H1 (cell line): ENCODE measurements at regions of chr12 and their contacts with region 1.

Region 1: GRCh38 chr12:56117778-56118687 is at the start of gene ZC3H10:
- DNase-seq: peak; percentile 96 to 100
- H3K4me3 ChIP-seq: peak within 1 kb of the TSS; percentile 85 to 99 (median 96)
- H3K27ac ChIP-seq: peak within 1 kb of the TSS; percentile 97
- H3K4me1 ChIP-seq: peaks cover 0 to 9% (median 5%) of the 10 kb centered on the region in 4 experiments; a peak in 5 of 7 replicates
- H3K27me3 ChIP-seq: no peaks in the 10 kb centered on the region
- CTCF ChIP-seq: peak; percentile 28 to 53 (median 41)
- EP300 ChIP-seq: peak; percentile 2 to 64; a peak in 2 of 3 replicates
- POLR2A ChIP-seq: peak; percentile 98 to 100
- RAD21 ChIP-seq: peak in 1 of 2 experiments; percentile 10; a peak in 1 of 4 replicates
- total RNA-seq, gene ZC3H10: 11.2 and 12.5 TPM in 2 replicates

Region 2: GRCh38 chr12:55982319-55982936 is 135.6 kb before region 1 on chr12:
- CTCF ChIA-PET with region 1: no interaction called
- POLR2A ChIA-PET with region 1: no interaction called
- DNase-seq: no peak
- H3K4me3 ChIP-seq: no peak overlapping the region
- H3K27ac ChIP-seq: no peak overlapping the region
- H3K4me1 ChIP-seq: no peaks in the 10 kb centered on the region
- H3K27me3 ChIP-seq: no peaks in the 10 kb centered on the region
- CTCF ChIP-seq: no peak
- EP300 ChIP-seq: no peak
- POLR2A ChIP-seq: no peak
- RAD21 ChIP-seq: no peak

Region 3: GRCh38 chr12:56041552-56042429 is 76.2 kb before region 1 on chr12 and contains the start of gene RPS26:
- CTCF ChIA-PET with region 1: interaction called, 4 read pairs
- POLR2A ChIA-PET with region 1: interaction called, 33 read pairs
- DNase-seq: peak; percentile 89 to 99
- H3K4me3 ChIP-seq: peak within 1 kb of the TSS; percentile 73 to 95 (median 86)
- H3K27ac ChIP-seq: peak within 1 kb of the TSS; percentile 98
- H3K4me1 ChIP-seq: peaks cover 0 to 12% (median 4%) of the 10 kb centered on the region in 4 experiments; a peak in 5 of 7 replicates
- H3K27me3 ChIP-seq: no peaks in the 10 kb centered on the region
- CTCF ChIP-seq: peak; percentile 43 to 56 (median 55)
- EP300 ChIP-seq: no peak
- POLR2A ChIP-seq: peak; percentile 98 to 99
- RAD21 ChIP-seq: peak; percentile 63 to 69
- total RNA-seq, gene RPS26: 53.4 and 64.3 TPM in 2 replicates

Region 4: DNA sequence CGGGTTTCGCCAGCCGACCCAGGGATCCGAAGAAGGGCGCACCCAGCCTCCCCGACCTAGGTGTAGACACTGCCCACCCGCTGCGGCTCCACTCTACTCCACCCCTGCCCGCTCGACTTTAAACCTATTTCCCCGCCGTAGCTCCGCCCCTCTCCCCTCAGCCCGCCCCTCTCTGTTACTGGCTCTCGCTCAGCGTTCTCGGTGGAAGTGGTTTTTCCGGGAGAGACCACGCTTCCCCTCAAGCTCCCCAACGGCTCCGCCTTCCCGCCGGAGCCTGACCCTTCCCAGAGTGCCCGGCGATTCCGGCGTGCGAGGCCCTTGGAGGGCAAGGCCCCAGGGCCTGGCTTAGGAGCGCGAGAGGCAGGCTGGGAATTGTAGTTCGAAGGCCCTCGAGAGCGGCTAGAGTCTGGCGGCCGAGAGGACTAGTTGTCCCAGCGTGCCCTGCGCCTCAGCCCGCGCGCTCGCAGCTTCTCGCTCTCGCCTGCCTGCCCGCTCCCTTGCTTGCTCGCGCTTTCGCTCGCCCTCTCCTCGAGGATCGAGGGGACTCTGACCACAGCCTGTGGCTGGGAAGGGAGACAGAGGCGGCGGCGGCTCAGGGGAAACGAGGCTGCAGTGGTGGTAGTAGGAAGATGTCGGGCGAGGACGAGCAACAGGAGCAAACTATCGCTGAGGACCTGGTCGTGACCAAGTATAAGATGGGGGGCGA is 13.8 kb before region 1 on chr12 and contains the start of gene PA2G4:
- CTCF ChIA-PET with region 1: interaction called, 34 read pairs
- POLR2A ChIA-PET with region 1: interaction called, 267 read pairs
- DNase-seq: peak; percentile 95 to 99
- H3K4me3 ChIP-seq: peak within 1 kb of the TSS; percentile 81 to 95 (median 92)
- H3K27ac ChIP-seq: peak within 1 kb of the TSS; percentile 88; the same call in 1 of the 2 replicates
- H3K4me1 ChIP-seq: peaks cover 0 to 9% (median 3%) of the 10 kb centered on the region in 4 experiments; a peak in 5 of 7 replicates
- H3K27me3 ChIP-seq: no peaks in the 10 kb centered on the region
- CTCF ChIP-seq: no peak
- EP300 ChIP-seq: no peak
- POLR2A ChIP-seq: peak; percentile 69 to 70; a peak in 2 of 3 replicates
- RAD21 ChIP-seq: no peak
- total RNA-seq, gene PA2G4: 237 and 242 TPM in 2 replicates

Region 5: GRCh38 chr12:56152318-56153033 is 34.4 kb after region 1 on chr12 and contains the start of gene MYL6B:
- CTCF ChIA-PET with region 1: interaction called, 22 read pairs
- POLR2A ChIA-PET with region 1: interaction called, 36 read pairs
- DNase-seq: peak; percentile 66 to 91
- H3K4me3 ChIP-seq: peak within 1 kb of the TSS; percentile 66 to 84 (median 82)
- H3K27ac ChIP-seq: no peak within 1 kb of the TSS
- H3K4me1 ChIP-seq: peaks cover 5 to 13% (median 9%) of the 10 kb centered on the region in 4 experiments; a peak in 6 of 7 replicates
- H3K27me3 ChIP-seq: no peaks in the 10 kb centered on the region; a peak in 1 of 7 replicates
- CTCF ChIP-seq: no peak
- EP300 ChIP-seq: no peak
- POLR2A ChIP-seq: peak; percentile 46 to 59; a peak in 1 of 3 replicates
- RAD21 ChIP-seq: no peak
- total RNA-seq, gene MYL6B: 162 and 163 TPM in 2 replicates

Region 6: DNA sequence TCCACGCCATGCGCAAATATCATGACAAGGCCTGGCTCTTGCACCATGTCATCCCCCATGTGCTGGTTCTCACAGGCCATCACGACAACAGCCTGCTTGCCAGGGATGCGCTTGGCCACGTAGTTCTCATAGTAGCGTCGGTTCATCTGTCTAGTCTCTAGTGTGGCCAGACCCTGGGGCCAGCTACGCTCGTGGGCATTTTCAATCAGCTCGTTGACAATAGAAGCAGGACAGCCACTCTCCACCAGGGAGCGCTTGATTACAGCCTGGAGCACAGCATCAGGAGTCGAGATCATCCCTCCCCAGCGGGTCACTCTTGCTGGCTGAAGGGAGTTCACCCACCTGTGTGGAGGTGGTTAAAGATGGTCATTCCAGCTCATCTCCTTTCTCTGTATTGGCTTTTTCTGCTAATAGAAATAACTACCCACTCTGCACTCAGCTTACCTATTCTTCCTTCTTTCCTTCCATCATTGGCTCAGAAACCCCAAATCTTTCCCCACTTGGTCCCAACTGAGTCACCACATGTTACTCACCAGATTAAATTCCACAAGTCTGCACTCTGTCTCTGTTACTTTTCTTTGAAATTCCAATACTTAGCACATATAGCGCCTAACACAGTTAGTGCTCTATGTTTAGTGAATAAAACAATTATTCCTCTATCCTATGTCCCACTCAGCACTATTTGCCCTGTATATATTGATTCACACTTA is 88.6 kb after region 1 on chr12:
- CTCF ChIA-PET with region 1: interaction called, 12 read pairs
- POLR2A ChIA-PET with region 1: interaction called, 5 read pairs
- DNase-seq: peak in 1 of 2 experiments; percentile 84
- H3K4me3 ChIP-seq: no peak overlapping the region
- H3K27ac ChIP-seq: no peak overlapping the region
- H3K4me1 ChIP-seq: no peaks in the 10 kb centered on the region
- H3K27me3 ChIP-seq: no peaks in the 10 kb centered on the region
- CTCF ChIP-seq: peak; percentile 78 to 91 (median 85)
- EP300 ChIP-seq: no peak
- POLR2A ChIP-seq: 0 out of 3 replicates have a peak, but pooled peaks of 1 of the 2 experiments have one; percentile 5
- RAD21 ChIP-seq: peak; percentile 68 to 74

Region 7: GRCh38 chr12:56266693-56267442 is 148.8 kb after region 1 on chr12 and contains the start of gene COQ10A:
- CTCF ChIA-PET with region 1: no interaction called
- POLR2A ChIA-PET with region 1: interaction called, 12 read pairs
- DNase-seq: peak; percentile 51 to 95
- H3K4me3 ChIP-seq: peak within 1 kb of the TSS; percentile 82 to 88 (median 87)
- H3K27ac ChIP-seq: peak within 1 kb of the TSS; percentile 84
- H3K4me1 ChIP-seq: peaks cover 0 to 9% (median 3%) of the 10 kb centered on the region in 4 experiments; a peak in 4 of 7 replicates
- H3K27me3 ChIP-seq: no peaks in the 10 kb centered on the region
- CTCF ChIP-seq: peak; percentile 41 to 71 (median 70)
- EP300 ChIP-seq: no peak
- POLR2A ChIP-seq: peak; percentile 51 to 85
- RAD21 ChIP-seq: peak in 1 of 2 experiments; percentile 1; a peak in 1 of 4 replicates
- total RNA-seq, gene COQ10A: 21.8 and 22.8 TPM in 2 replicates